Activated naive CD4-positive, alpha-beta T cell treated with anti-CD3 and anti-CD28 coated beads for 36 hours (primary cell): ENCODE measurements at regions of chr2 and their contacts with region 1.

Region 1: GRCh38 chr2:68121873-68122679 is 35.6 kb upstream of the PNO1 start:
- DNase-seq: peak; percentile 87
- H3K4me3 Mint-ChIP-seq: no peak overlapping the region
- H3K27ac Mint-ChIP-seq: no peak overlapping the region
- H3K4me1 Mint-ChIP-seq: peaks cover 2% of the 10 kb centered on the region
- H3K27me3 Mint-ChIP-seq: no peaks in the 10 kb centered on the region

Region 2: DNA sequence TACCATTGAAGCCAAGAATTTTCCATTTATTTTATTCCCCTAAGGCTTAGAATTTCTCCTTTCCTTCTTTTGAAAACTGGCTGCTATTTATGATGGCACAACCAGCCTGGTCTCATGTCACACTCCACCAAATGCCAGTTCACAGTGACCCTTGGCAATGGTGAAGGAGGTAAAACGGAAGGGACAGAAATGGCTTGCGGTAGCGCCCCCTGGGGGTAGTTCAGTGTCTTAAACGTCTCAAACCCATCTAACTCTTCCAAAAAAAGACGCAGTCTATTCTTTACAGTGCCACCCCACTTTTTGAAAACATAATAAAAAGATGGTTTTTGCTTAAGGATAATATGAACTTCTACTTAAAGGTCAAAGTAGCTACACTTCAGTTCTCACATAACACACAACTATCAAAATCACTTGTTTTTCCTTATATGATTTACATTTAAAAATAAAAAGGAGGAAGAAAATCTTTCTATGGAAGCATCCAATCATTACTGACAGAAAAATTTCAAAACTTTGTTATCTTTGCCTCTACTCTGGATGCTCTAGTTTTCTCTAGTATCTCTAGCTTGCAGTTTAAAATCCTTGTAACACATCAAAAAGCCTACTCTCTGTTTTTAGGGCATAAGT is 63.6 kb after region 1 on chr2:
- CTCF ChIA-PET with region 1: interaction called, 4 read pairs
- intact Hi-C with region 1: loop called (anchors 2 kb)
- DNase-seq: peak; percentile 67
- H3K4me3 Mint-ChIP-seq: no peak overlapping the region
- H3K27ac Mint-ChIP-seq: no peak overlapping the region
- H3K4me1 Mint-ChIP-seq: peaks cover 32% of the 10 kb centered on the region
- H3K27me3 Mint-ChIP-seq: no peaks in the 10 kb centered on the region

Region 3: GRCh38 chr2:68244456-68244855 is 122.4 kb after region 1 on chr2:
- CTCF ChIA-PET with region 1: interaction called, 4 read pairs
- intact Hi-C with region 1: loop called (anchors 1 kb)
- DNase-seq: no peak
- H3K4me3 Mint-ChIP-seq: no peak overlapping the region
- H3K27ac Mint-ChIP-seq: no peak overlapping the region
- H3K4me1 Mint-ChIP-seq: peaks cover 27% of the 10 kb centered on the region
- H3K27me3 Mint-ChIP-seq: no peaks in the 10 kb centered on the region

Region 4: DNA sequence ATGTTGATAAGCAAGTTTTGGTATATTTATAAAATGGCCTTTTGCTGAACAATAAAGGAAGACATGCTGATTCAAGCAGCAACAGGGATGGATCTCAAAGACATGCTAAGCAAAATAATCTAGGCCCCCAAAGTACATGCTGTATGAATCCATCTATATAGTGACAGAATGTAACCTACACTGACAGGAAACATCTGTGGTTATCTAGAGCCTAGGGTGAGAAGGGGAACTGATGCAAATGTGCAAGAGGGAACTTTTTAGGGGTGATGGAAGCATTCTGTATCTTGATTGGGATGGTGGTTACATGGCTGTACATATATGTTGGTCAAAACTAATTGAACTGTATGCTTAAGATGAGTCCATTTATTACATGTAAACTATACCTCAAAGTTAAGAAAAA is 173.4 kb after region 1 on chr2:
- CTCF ChIA-PET with region 1: interaction called, 23 read pairs
- intact Hi-C with region 1: loop called (anchors 1 kb)
- DNase-seq: no peak
- H3K4me3 Mint-ChIP-seq: no peak overlapping the region
- H3K27ac Mint-ChIP-seq: no peak overlapping the region
- H3K4me1 Mint-ChIP-seq: no peaks in the 10 kb centered on the region
- H3K27me3 Mint-ChIP-seq: peaks cover 8% of the 10 kb centered on the region

Region 5: DNA sequence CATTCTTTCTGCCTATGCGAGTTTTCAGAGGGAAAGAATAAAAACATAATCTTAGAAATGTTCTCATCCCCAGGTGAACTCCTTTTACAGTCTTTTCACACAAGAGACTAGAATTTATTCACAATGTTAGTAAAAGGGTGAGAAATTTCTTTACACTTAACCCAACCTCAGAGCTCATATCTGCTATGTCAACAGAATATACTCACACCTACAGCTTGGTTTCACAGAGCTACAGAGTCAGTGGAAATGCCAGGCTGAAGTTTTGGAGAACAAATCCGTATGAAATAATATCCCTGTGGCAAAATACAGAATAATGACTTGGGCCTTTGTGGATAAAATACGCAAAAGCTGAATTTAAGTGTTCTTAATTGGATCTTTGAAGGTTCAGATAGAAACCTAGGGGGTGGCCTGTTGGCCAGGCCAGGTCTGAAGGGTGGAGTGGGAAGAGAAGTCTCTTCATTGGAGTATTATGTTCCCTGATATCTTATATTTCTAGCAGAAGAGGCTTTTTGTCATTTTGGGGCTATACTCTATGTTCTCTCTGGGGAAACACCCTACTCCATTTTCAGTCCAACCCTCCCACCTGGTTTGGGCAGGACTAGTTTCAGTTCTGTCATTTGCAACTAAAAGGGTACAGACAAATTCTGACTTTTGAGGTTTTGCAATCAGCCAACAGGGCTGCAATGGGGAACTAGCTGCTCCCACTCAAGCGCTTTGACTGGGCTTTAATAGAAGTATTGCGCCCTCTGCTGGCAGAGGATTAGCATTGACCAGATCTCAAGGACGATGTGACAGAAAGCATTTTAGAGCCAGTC is 319.3 kb after region 1 on chr2:
- CTCF ChIA-PET with region 1: interaction called, 5 read pairs
- intact Hi-C with region 1: loop called (anchors 1 kb)
- DNase-seq: peak; percentile 92
- H3K4me3 Mint-ChIP-seq: no peak overlapping the region
- H3K27ac Mint-ChIP-seq: peak overlapping the region; percentile 28
- H3K4me1 Mint-ChIP-seq: peaks cover 15% of the 10 kb centered on the region
- H3K27me3 Mint-ChIP-seq: peaks cover 2% of the 10 kb centered on the region